ENCODE measurements at regions of chr7 and their contacts with region 1.

Region 1: GRCh38 chr7:21448974-21449373 is 21.1 kb downstream of the SP4 start:
- DNase-seq: no peak
- H3K4me3 ChIP-seq: no peak overlapping the region
- H3K27ac ChIP-seq: no peak overlapping the region
- H3K4me1 ChIP-seq: no peaks in the 10 kb centered on the region
- H3K27me3 ChIP-seq: no peaks in the 10 kb centered on the region
- CTCF ChIP-seq: no peak

Region 2: DNA sequence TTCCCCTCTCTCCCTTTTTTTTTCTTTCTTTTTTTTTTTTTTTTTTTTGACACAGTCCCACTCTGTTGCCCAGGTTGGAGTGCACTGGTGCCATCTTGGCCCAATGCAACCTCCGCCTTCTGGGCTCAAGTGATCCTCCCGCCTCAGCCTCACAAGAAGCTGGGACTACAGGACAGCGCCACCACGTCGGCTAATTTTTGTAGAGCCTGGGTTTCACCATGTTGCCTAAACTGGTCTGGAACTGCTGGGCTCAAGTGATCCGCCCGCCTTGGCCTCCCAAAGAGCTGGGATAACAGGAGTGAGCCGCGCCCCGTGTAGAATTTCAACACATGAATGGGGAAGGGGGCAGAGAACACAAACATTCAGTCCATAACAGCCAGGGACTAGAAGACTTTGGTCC is 23.7 kb before region 1 on chr7:
- CTCF ChIA-PET with region 1: no interaction called
- POLR2A ChIA-PET with region 1: interaction called, 12 read pairs
- intact Hi-C with region 1: no loop called
- DNase-seq: no peak
- H3K4me3 ChIP-seq: no peak overlapping the region
- H3K27ac ChIP-seq: no peak overlapping the region
- H3K4me1 ChIP-seq: peaks cover 5% of the 10 kb centered on the region
- H3K27me3 ChIP-seq: no peaks in the 10 kb centered on the region
- CTCF ChIP-seq: no peak